K562 (cell line): ENCODE measurements at regions of chr17 and their contacts with region 1.

Region 1: DNA sequence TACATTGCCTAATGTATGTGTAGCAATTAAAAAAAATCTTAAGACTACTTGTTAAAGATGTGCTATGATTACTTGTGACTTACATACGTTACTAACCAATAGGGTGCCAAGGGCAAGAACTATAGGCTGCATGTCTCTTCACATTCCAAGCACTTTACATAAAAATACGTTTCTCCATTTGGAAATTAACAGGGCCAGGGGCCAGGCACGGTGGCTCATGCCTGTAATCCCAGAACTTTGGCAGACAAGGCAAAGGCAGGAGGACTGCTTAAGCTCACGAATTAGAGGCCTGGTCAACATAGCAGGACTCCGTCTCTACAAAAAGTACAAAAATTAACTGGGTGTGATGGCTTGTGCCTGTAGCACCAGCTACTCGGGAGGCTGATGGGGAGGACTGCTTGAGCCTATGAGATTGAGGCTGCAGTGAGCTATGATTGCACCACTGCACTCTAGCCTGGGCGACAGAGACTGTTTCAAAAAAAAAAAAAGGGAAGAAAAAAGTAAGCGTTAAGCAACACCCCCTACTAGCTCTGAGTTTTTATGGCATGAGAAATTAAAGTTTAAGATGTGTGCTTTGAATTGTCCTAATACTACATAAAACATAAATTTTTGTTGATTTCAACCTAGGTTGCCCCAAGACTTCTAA is 12.3 kb downstream of the PSMD12 start:
- DNase-seq: no peak
- ATAC-seq: no peak
- H3K4me3 ChIP-seq: no peak overlapping the region
- H3K27ac ChIP-seq: no peak overlapping the region
- H3K4me1 ChIP-seq: no peaks in the 10 kb centered on the region
- H3K27me3 ChIP-seq: no peaks in the 10 kb centered on the region
- CTCF ChIP-seq: no peak
- EP300 ChIP-seq: no peak
- POLR2A ChIP-seq: no peak
- RAD21 ChIP-seq: no peak

Region 2: GRCh38 chr17:67343251-67343650 is 10.8 kb before region 1 on chr17:
- CTCF ChIA-PET with region 1: no interaction called
- POLR2A ChIA-PET with region 1: interaction called, 24 read pairs
- in situ Hi-C with region 1: no loop called
- intact Hi-C with region 1: no loop called
- DNase-seq: no peak
- ATAC-seq: peak; percentile 36; the same call in 2 of the 3 replicates
- H3K4me3 ChIP-seq: no peak overlapping the region
- H3K27ac ChIP-seq: no peak overlapping the region
- H3K4me1 ChIP-seq: no peaks in the 10 kb centered on the region
- H3K27me3 ChIP-seq: no peaks in the 10 kb centered on the region
- CTCF ChIP-seq: no peak
- EP300 ChIP-seq: no peak
- POLR2A ChIP-seq: peak; percentile 70
- RAD21 ChIP-seq: no peak

Region 3: GRCh38 chr17:67366193-67367157 is 12.4 kb after region 1 on chr17 and contains the start of gene PSMD12:
- CTCF ChIA-PET with region 1: no interaction called
- POLR2A ChIA-PET with region 1: interaction called, 15 read pairs
- in situ Hi-C with region 1: no loop called
- intact Hi-C with region 1: no loop called
- DNase-seq: peak; percentile 95 to 96 (median 95)
- ATAC-seq: peak; percentile 92
- H3K4me3 ChIP-seq: peak within 1 kb of the TSS; percentile 92
- H3K27ac ChIP-seq: peak within 1 kb of the TSS; percentile 94
- H3K4me1 ChIP-seq: peaks cover 14 to 21% of the 10 kb centered on the region in 2 experiments; a peak in 4 of 5 replicates
- H3K27me3 ChIP-seq: no peaks in the 10 kb centered on the region
- CTCF ChIP-seq: no peak
- EP300 ChIP-seq: 0 out of 2 replicates have a peak, but pooled peaks have one; percentile 24
- POLR2A ChIP-seq: peak; percentile 97
- RAD21 ChIP-seq: no peak
- polyA plus RNA-seq, gene PSMD12: 39.5 to 65.5 TPM